Astrocyte of the cerebellum (primary cell): ENCODE measurements at regions of chr6 and their contacts with region 1.

Region 1: GRCh38 chr6:158706096-158706982 is 56.5 kb downstream of the SYTL3 start:
- DNase-seq: no peak
- H3K4me3 ChIP-seq: no peak overlapping the region
- CTCF ChIP-seq: peak; percentile 78

Region 2: GRCh38 chr6:158631678-158632537 is 74.4 kb before region 1 on chr6:
- in situ Hi-C with region 1: no loop called
- DNase-seq: peak; percentile 60
- H3K4me3 ChIP-seq: no peak overlapping the region
- CTCF ChIP-seq: no peak

Region 3: GRCh38 chr6:158758451-158758861 is 52.1 kb after region 1 on chr6:
- in situ Hi-C with region 1: loop called (anchors 5 kb)
- DNase-seq: no peak
- H3K4me3 ChIP-seq: no peak overlapping the region
- CTCF ChIP-seq: no peak

Region 4: GRCh38 chr6:158972241-158973233 is 266.2 kb after region 1 on chr6:
- in situ Hi-C with region 1: loop called (anchors 5 kb)
- DNase-seq: peak; percentile 39
- H3K4me3 ChIP-seq: no peak overlapping the region
- CTCF ChIP-seq: peak; percentile 27